ENCODE measurements at regions of chr17 and their contacts with region 1.

Region 1: DNA sequence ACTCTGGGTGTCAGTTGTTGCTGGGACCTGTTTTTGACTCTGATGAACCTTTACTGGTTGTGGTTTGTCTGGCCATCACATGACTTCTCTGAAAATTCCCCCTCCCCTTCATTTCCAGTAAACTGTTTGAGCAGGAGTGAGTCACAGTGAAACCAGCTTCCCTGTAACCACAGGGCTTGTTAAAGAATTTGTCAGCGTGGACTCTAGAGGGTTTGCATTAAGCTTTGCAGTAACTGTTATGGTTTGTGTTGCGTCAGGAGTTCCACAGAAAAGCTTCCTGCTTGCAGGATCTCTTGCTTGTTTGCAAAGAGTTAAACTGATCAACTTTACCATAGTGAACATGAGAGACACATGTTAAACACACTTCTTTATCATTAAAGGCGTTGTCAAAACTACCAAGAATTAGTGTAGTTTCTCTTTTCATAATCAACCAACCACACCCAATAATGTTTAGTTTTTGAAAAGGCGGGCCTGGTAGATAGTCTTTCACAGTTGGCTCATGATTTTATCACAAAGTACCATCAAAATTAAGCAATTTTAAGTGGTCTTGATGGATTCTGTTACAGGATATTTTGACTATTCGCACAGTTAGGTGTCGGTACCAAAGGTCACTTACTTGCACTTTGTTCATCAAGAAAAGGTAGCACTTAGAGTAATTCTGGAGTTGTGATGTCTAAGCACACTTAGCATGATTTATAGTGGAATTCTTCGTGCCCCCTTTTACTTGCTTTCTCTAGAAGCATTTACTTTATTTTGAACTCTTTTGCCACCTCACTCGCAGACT is 79.3 kb downstream of the VMP1 start:
- DNase-seq: peak; percentile 86 to 96 (median 91)
- H3K4me3 ChIP-seq: peak overlapping the region; percentile 18 to 51
- H3K4me3 Mint-ChIP-seq: peak overlapping the region; percentile 72 to 89 (median 87)
- H3K27ac ChIP-seq: peak overlapping the region; percentile 87
- H3K27ac Mint-ChIP-seq: peak overlapping the region; percentile 94 to 100 (median 99)
- H3K4me1 ChIP-seq: peaks cover 78% of the 10 kb centered on the region
- H3K4me1 Mint-ChIP-seq: peaks cover 38 to 64% (median 50%) of the 10 kb centered on the region in 4 donors
- H3K27me3 ChIP-seq: no peaks in the 10 kb centered on the region
- H3K27me3 Mint-ChIP-seq: no peaks in the 10 kb centered on the region

Region 2: DNA sequence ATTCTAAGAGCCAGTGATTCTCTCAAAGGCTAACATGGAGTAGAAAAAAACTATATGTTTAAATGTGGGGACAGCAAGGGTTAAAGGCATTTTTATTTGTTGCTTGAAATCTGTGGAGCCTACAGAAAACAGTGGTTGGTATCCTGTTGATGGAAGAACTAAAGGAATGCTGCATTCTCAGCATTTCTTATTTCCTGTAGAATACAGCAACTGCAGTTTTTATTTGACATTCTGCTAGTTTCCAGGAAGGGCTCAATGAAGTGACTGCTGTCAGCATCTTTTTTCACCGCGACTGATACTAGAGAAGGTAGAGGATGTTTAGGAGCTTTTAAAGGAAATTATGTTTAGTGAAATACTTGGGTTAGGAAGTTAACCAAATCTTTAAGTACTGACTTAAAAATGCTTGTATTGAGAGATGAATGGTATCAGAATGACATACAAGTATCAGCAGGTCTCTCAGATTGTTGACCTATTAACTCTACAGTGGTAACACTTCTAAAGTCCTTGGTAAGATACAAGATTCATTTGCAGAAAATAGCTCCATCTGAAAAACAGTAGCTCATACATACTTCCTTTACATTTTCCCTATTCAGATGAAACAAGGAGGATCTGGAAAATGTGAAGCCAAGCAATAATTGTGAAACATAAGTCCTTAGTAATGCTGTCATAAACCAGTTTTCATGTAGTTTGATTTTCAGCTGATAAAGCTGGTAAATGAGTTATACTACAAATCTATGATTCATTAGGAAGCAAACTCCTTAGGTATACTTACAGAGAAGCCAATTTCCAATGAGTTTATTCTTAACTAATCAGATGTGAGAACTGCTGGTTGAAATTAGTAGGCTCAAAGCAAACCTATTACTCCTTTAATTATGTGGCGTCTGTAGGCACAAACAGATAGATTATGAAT is 151.8 kb before region 1 on chr17:
- CTCF ChIA-PET with region 1: no interaction called
- POLR2A ChIA-PET with region 1: no interaction called
- intact Hi-C with region 1: no loop called
- DNase-seq: peak in 1 of 5 donors; percentile 6
- H3K4me3 ChIP-seq: no peak overlapping the region
- H3K4me3 Mint-ChIP-seq: peak overlapping the region in 7 of 8 donors; percentile 17 to 73 (median 51)
- H3K27ac ChIP-seq: no peak overlapping the region
- H3K27ac Mint-ChIP-seq: peak overlapping the region in 6 of 7 donors; percentile 35 to 74 (median 58)
- H3K4me1 ChIP-seq: peaks cover 86% of the 10 kb centered on the region
- H3K4me1 Mint-ChIP-seq: peaks cover 46 to 81% (median 65%) of the 10 kb centered on the region in 4 donors
- H3K27me3 ChIP-seq: no peaks in the 10 kb centered on the region
- H3K27me3 Mint-ChIP-seq: no peaks in the 10 kb centered on the region

Region 3: GRCh38 chr17:59800530-59800942 is 13.8 kb after region 1 on chr17:
- CTCF ChIA-PET with region 1: interaction called, 5 read pairs
- POLR2A ChIA-PET with region 1: interaction called, 18 read pairs
- intact Hi-C with region 1: no loop called
- DNase-seq: no peak
- H3K4me3 ChIP-seq: no peak overlapping the region
- H3K4me3 Mint-ChIP-seq: no peak overlapping the region
- H3K27ac ChIP-seq: no peak overlapping the region
- H3K27ac Mint-ChIP-seq: peak overlapping the region in 2 of 7 donors; percentile 41 to 42
- H3K4me1 ChIP-seq: no peaks in the 10 kb centered on the region
- H3K4me1 Mint-ChIP-seq: peaks cover 7 to 17% (median 12%) of the 10 kb centered on the region in 4 donors
- H3K27me3 ChIP-seq: no peaks in the 10 kb centered on the region
- H3K27me3 Mint-ChIP-seq: no peaks in the 10 kb centered on the region

Region 4: GRCh38 chr17:59829217-59830006 is 42.7 kb after region 1 on chr17:
- CTCF ChIA-PET with region 1: interaction called, 20 read pairs
- POLR2A ChIA-PET with region 1: interaction called, 128 read pairs
- intact Hi-C with region 1: loop called (anchors 1 kb)
- DNase-seq: peak; percentile 36 to 83 (median 44)
- H3K4me3 ChIP-seq: peak overlapping the region in 1 of 2 donors; percentile 34
- H3K4me3 Mint-ChIP-seq: peak overlapping the region; percentile 71 to 88 (median 78)
- H3K27ac ChIP-seq: peak overlapping the region; percentile 74
- H3K27ac Mint-ChIP-seq: peak overlapping the region; percentile 89 to 97 (median 96)
- H3K4me1 ChIP-seq: peaks cover 78% of the 10 kb centered on the region
- H3K4me1 Mint-ChIP-seq: peaks cover 56 to 76% (median 65%) of the 10 kb centered on the region in 4 donors
- H3K27me3 ChIP-seq: no peaks in the 10 kb centered on the region
- H3K27me3 Mint-ChIP-seq: no peaks in the 10 kb centered on the region

Region 5: DNA sequence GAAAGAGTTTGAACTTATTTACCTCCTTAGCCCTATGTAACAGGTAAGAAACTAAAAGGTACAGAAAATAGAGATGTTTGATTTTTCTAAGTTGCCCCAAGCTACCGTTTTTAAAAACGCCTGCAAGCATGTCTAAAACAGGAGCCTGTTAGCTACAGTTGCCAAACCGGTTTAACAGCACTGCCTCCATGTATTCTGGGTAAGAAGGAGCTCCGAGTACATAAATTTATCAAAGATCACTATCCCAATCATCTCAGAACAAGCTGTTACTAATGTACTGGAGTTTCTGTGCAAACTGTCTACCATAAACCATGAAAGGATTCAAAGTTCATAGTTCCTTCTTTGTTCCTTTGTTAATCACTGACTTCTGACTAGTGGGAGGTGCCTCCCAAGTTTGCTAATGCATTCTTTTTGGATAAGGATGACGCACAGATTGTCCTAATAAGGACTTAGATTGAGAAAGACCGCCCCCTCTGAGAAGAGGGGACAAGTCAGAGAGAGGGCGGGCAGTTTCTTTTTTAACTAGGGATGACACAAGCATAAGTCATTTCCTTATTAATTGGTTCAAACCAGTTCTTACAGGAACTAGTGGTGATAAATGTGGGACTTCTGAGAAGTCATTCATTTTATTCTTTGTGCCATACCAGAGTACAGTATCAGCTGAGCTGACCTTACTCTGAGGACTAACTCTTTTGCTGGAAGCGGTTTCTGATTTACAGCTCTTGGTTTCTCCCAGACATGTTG is 50.8 kb after region 1 on chr17:
- CTCF ChIA-PET with region 1: interaction called, 67 read pairs
- POLR2A ChIA-PET with region 1: interaction called, 365 read pairs
- intact Hi-C with region 1: loop called (anchors 1 kb)
- DNase-seq: peak; percentile 84 to 95 (median 91)
- H3K4me3 ChIP-seq: peak overlapping the region; percentile 78 to 94
- H3K4me3 Mint-ChIP-seq: peak overlapping the region; percentile 94 to 100 (median 97)
- H3K27ac ChIP-seq: peak overlapping the region; percentile 93
- H3K27ac Mint-ChIP-seq: peak overlapping the region; percentile 96 to 99 (median 98)
- H3K4me1 ChIP-seq: peaks cover 19% of the 10 kb centered on the region
- H3K4me1 Mint-ChIP-seq: peaks cover 23 to 59% (median 35%) of the 10 kb centered on the region in 4 donors
- H3K27me3 ChIP-seq: no peaks in the 10 kb centered on the region
- H3K27me3 Mint-ChIP-seq: no peaks in the 10 kb centered on the region

Region 6: GRCh38 chr17:59853168-59853918 is 66.6 kb after region 1 on chr17:
- CTCF ChIA-PET with region 1: interaction called, 13 read pairs
- POLR2A ChIA-PET with region 1: interaction called, 365 read pairs
- intact Hi-C with region 1: loop called (anchors 1 kb)
- DNase-seq: peak; percentile 63 to 79 (median 69)
- H3K4me3 ChIP-seq: no peak overlapping the region
- H3K4me3 Mint-ChIP-seq: peak overlapping the region in 6 of 8 donors; percentile 1 to 75 (median 29)
- H3K27ac ChIP-seq: no peak overlapping the region
- H3K27ac Mint-ChIP-seq: peak overlapping the region; percentile 35 to 93 (median 71)
- H3K4me1 ChIP-seq: peaks cover 43% of the 10 kb centered on the region
- H3K4me1 Mint-ChIP-seq: peaks cover 23 to 35% (median 30%) of the 10 kb centered on the region in 4 donors
- H3K27me3 ChIP-seq: no peaks in the 10 kb centered on the region
- H3K27me3 Mint-ChIP-seq: no peaks in the 10 kb centered on the region

Region 7: GRCh38 chr17:59859444-59860025 is 72.8 kb after region 1 on chr17:
- CTCF ChIA-PET with region 1: interaction called, 13 read pairs
- POLR2A ChIA-PET with region 1: interaction called, 365 read pairs
- intact Hi-C with region 1: no loop called
- DNase-seq: peak in 4 of 5 donors; percentile 43 to 57 (median 47)
- H3K4me3 ChIP-seq: no peak overlapping the region
- H3K4me3 Mint-ChIP-seq: no peak overlapping the region
- H3K27ac ChIP-seq: no peak overlapping the region
- H3K27ac Mint-ChIP-seq: peak overlapping the region in 6 of 7 donors; percentile 1 to 60 (median 36)
- H3K4me1 ChIP-seq: peaks cover 5% of the 10 kb centered on the region
- H3K4me1 Mint-ChIP-seq: peaks cover 0 to 9% (median 5%) of the 10 kb centered on the region in 4 donors
- H3K27me3 ChIP-seq: no peaks in the 10 kb centered on the region
- H3K27me3 Mint-ChIP-seq: no peaks in the 10 kb centered on the region

Region 8: GRCh38 chr17:59964482-59965328 is 178.0 kb after region 1 on chr17 and contains the start of gene RNFT1:
- CTCF ChIA-PET with region 1: no interaction called
- POLR2A ChIA-PET with region 1: interaction called, 11 read pairs
- intact Hi-C with region 1: no loop called
- DNase-seq: peak; percentile 85 to 87 (median 87)
- H3K4me3 ChIP-seq: peak within 1 kb of the TSS; percentile 80 to 90
- H3K4me3 Mint-ChIP-seq: peak within 1 kb of the TSS; percentile 93 to 98 (median 94)
- H3K27ac ChIP-seq: peak within 1 kb of the TSS; percentile 83
- H3K27ac Mint-ChIP-seq: peak within 1 kb of the TSS; percentile 90 to 99 (median 99)
- H3K4me1 ChIP-seq: peaks cover 25% of the 10 kb centered on the region
- H3K4me1 Mint-ChIP-seq: peaks cover 12 to 26% (median 18%) of the 10 kb centered on the region in 4 donors
- H3K27me3 ChIP-seq: no peaks in the 10 kb centered on the region
- H3K27me3 Mint-ChIP-seq: no peaks in the 10 kb centered on the region
- total RNA-seq, gene RNFT1: 36.6 to 40.3 TPM

Measured in CD4-positive, alpha-beta memory T cell (primary cell).